ENCODE measurements at regions of chr6 and their contacts with region 1.

Region 1: GRCh38 chr6:110053395-110054240 is 75.5 kb downstream of the GPR6 start:
- DNase-seq: no peak
- H3K4me3 Mint-ChIP-seq: no peak overlapping the region
- H3K27ac Mint-ChIP-seq: no peak overlapping the region
- H3K4me1 Mint-ChIP-seq: no peaks in the 10 kb centered on the region
- H3K27me3 Mint-ChIP-seq: peaks cover 13% of the 10 kb centered on the region

Region 2: DNA sequence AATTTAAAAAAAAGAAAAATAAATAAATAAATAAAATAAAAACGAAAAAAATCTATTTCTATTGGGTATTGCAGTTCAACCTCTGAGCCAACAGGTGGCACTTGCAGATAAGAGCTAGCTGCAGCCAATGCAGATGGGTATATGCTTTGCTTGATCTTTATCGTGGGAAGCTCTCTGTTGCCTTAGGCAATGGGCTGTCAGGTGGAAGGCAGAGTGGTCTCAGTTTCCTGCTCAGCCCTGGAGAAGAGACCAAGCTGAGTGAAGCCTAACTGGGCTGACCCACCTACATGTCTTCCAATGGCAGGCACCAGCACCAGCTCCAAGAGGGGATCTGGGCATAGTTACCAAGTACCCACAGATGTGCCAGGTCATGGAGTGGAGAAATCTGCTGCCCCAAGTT is 457.6 kb before region 1 on chr6:
- intact Hi-C with region 1: loop called (anchors 2 kb)
- DNase-seq: no peak
- H3K4me3 Mint-ChIP-seq: no peak overlapping the region
- H3K27ac Mint-ChIP-seq: no peak overlapping the region
- H3K4me1 Mint-ChIP-seq: no peaks in the 10 kb centered on the region
- H3K27me3 Mint-ChIP-seq: no peaks in the 10 kb centered on the region

Region 3: GRCh38 chr6:109705258-109705657 is 348.4 kb before region 1 on chr6:
- intact Hi-C with region 1: loop called (anchors 1 kb)
- DNase-seq: peak; percentile 53
- H3K4me3 Mint-ChIP-seq: no peak overlapping the region
- H3K27ac Mint-ChIP-seq: no peak overlapping the region
- H3K4me1 Mint-ChIP-seq: peaks cover 5% of the 10 kb centered on the region
- H3K27me3 Mint-ChIP-seq: no peaks in the 10 kb centered on the region

Region 4: DNA sequence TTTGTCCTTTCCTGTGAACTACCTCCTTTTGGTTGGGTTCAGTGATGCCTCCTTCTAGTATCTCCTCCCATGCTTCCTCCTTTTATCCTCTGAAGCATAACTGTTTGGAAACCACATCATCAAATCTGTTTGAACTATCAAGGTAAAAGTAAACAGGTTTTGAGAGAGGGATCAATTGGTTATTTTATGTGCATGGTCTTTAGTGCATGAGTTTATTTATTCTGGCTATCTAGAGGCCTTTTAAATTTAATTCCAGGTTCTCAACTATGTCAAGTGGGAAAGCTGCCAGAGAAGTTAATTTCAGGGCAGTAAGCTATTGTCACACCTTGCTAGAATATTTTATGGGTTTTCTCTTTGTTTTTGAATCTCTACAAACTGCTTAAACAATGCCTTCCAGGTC is 71.7 kb after region 1 on chr6:
- intact Hi-C with region 1: no loop called
- DNase-seq: no peak
- H3K4me3 Mint-ChIP-seq: no peak overlapping the region
- H3K27ac Mint-ChIP-seq: no peak overlapping the region
- H3K4me1 Mint-ChIP-seq: no peaks in the 10 kb centered on the region
- H3K27me3 Mint-ChIP-seq: no peaks in the 10 kb centered on the region

Measured in activated T-helper 1 cell treated with anti-CD3 and anti-CD28 coated beads, Interleukin-12 subunit alpha, Interleukin-12 subunit beta, Interleukin-2, Interleukin-4 antibody, amounts not matched to agents 30 ng/mL and 10 ng/mL and 1 ng/mL, durations not matched to agents 14 hours and 24 hours and 36 hours (primary cell).